ENCODE measurements at regions of chr1 and their contacts with region 1.

Region 1: GRCh38 chr1:209784265-209785169 is at the start of gene C1orf74:
- DNase-seq: peak; percentile 99
- ATAC-seq: peak; percentile 100
- H3K4me3 ChIP-seq: peak within 1 kb of the TSS; percentile 70
- H3K27ac ChIP-seq: peak within 1 kb of the TSS; percentile 65
- H3K4me1 ChIP-seq: peaks cover 18% of the 10 kb centered on the region
- H3K27me3 ChIP-seq: no peaks in the 10 kb centered on the region
- CTCF ChIP-seq: 0 out of 2 replicates have a peak, but pooled peaks have one; percentile 24
- total RNA-seq, gene C1orf74: 5.7 and 6.7 TPM in 2 replicates

Region 2: GRCh38 chr1:209302779-209303568 is 481.5 kb before region 1 on chr1:
- CTCF ChIA-PET with region 1: no interaction called
- POLR2A ChIA-PET with region 1: interaction called, 16 read pairs
- intact Hi-C with region 1: no loop called
- DNase-seq: peak; percentile 35
- ATAC-seq: peak; percentile 79
- H3K4me3 ChIP-seq: no peak overlapping the region
- H3K27ac ChIP-seq: no peak overlapping the region
- H3K4me1 ChIP-seq: peaks cover 15% of the 10 kb centered on the region
- H3K27me3 ChIP-seq: no peaks in the 10 kb centered on the region
- CTCF ChIP-seq: no peak

Measured in PC-3 (cell line).